ENCODE measurements at regions of chr15 and their contacts with region 1.

Region 1: DNA sequence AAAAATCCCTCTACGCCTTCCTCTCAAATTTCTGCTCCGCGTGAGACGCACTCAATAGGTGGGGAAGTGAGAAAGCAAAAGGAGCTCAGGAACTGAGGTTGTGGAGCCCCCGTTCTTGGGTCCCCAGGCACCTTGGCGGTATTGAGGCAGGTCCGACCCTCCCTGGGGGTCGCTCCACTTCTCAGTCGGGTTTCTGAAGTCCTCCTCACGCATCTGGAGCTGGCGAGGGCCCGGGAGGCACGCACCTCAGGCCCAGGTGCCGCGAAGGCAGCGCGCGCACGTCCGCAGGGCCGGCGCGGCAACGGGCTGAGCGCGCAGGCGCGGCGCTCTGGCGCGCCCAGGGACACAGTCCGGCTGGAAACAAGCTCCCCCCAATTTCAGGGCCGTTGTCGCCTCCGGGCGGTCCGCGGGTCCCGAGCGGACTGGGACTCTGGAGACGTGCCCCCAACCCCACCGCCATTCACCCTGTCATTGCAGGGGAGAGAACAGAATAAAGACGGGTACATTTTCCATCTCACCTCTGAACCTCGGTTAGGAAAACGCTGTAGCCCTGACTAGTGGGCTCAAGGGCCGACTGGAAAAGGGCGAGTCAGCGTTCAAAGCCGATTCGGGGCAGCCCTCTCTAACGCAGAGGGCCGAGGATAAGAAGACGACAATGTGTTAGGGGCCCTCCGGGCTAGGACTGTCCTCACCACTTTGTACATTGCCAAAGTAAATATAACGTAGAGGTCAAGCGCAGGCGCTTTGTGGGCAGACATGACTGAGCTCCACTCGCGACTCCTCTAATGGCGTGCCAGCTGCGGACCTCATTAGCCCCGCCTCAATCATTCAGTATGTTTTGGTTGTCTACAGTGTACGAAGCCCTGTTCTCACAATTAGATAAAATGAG is at the start of gene ZNF770:
- DNase-seq: peak; percentile 94
- ATAC-seq: peak; percentile 86
- H3K4me3 ChIP-seq: peak within 1 kb of the TSS; percentile 86 to 100 (median 96)
- H3K4me3 Mint-ChIP-seq: peak within 1 kb of the TSS; percentile 99
- H3K27ac ChIP-seq: peak within 1 kb of the TSS; percentile 90 to 97
- H3K27ac Mint-ChIP-seq: peak within 1 kb of the TSS; percentile 100
- H3K4me1 ChIP-seq: peaks cover 19 to 22% of the 10 kb centered on the region in 2 donors
- H3K4me1 Mint-ChIP-seq: peaks cover 45% of the 10 kb centered on the region
- H3K27me3 ChIP-seq: no peaks in the 10 kb centered on the region
- H3K27me3 Mint-ChIP-seq: peaks cover 2% of the 10 kb centered on the region
- CTCF ChIP-seq: no peak
- total RNA-seq, gene ZNF770: 45.8 and 49.3 TPM in 2 replicates

Region 2: DNA sequence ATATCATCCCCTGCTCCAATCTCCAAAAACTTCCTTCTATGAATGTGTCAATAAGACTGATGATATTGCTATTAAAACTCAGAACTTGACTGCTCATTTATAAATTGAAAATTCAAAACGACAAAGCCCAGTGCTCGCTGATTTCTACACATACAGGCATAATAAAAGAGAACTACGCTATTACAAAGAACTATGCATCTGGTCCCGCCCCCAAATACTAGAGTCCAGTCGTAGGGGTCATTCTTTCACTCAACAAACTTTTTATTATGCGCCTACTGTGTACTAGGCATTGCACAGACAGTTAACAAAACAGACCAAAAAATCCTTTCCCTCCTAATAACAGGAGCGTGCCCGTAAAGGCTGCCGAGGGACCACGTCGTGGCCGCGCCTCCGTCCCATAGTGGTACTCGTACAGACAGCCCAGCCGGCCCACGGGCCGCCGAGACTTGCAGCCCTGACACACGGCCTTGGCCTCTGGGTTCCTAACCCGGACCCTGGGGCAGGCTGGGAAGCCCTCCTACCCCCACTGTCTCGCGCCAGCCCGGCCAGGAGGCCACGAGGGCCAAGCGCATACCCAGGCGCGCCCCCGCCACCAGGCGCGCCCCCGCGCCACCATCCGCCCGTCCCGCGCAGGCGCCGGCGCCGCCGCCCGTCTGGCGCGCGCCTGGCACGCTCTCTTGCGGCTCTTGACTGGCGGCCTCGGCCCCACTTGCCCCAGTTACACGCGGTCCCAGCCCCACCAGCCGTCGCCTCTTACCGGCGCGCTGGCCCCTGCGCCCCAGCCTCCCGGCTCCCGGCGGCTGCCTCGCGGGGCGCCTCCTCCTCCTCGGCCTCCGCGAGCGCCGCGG is 950.0 kb before region 1 on chr15:
- CTCF ChIA-PET with region 1: no interaction called
- POLR2A ChIA-PET with region 1: no interaction called
- intact Hi-C with region 1: loop called (anchors 1 kb)
- DNase-seq: peak; percentile 89
- ATAC-seq: peak; percentile 78
- H3K4me3 ChIP-seq: peak overlapping the region; percentile 63 to 98 (median 66)
- H3K4me3 Mint-ChIP-seq: peak overlapping the region; percentile 97
- H3K27ac ChIP-seq: peak overlapping the region; percentile 49 to 78
- H3K27ac Mint-ChIP-seq: peak overlapping the region; percentile 96
- H3K4me1 ChIP-seq: peaks cover 14 to 15% of the 10 kb centered on the region in 2 donors
- H3K4me1 Mint-ChIP-seq: peaks cover 18% of the 10 kb centered on the region
- H3K27me3 ChIP-seq: no peaks in the 10 kb centered on the region
- H3K27me3 Mint-ChIP-seq: no peaks in the 10 kb centered on the region
- CTCF ChIP-seq: no peak

Region 3: DNA sequence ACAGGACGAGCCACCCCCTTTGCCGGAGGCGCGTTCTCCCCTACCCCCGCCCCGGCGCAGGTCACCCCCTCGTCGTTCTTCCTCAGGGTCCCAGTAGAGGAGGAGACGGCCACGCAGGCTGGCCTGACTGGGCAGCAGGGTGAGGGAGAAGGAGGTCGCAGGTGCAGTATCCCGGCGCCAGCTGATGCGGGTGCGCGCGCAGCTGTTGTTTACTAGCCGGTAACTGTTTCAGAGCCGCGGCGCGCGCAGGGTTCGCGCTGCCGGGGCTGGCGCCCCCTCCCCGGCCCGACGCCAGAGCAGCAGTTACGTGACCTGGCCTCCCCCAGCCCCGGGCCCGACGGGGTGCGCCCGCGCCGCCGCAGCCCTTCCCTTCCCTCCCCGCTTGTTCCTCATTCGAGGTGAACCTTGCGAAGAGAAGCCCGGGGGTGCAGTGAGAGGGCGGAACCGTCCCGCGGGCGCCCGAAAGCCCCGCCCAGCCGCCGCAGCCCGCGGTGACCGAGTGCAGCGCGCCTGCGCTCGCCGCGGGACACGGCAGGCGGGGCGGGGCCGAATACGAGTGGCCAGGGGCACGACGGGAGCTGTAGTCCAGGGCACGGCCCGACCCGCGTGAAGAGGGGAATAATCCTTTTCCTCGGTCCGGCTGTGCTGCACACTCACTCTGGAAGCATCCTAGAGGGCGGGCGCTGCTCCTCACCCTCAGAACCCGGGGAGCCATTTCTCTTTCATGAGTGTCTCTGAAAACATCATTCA is 650.5 kb before region 1 on chr15 and contains the start of gene SLC12A6:
- CTCF ChIA-PET with region 1: interaction called, 3 read pairs
- POLR2A ChIA-PET with region 1: no interaction called
- intact Hi-C with region 1: loop called (anchors 10 kb)
- DNase-seq: peak; percentile 97
- ATAC-seq: peak; percentile 84
- H3K4me3 ChIP-seq: peak within 1 kb of the TSS; percentile 96 to 98 (median 97)
- H3K4me3 Mint-ChIP-seq: peak within 1 kb of the TSS; percentile 100
- H3K27ac ChIP-seq: peak within 1 kb of the TSS; percentile 87 to 93
- H3K27ac Mint-ChIP-seq: peak within 1 kb of the TSS; percentile 99
- H3K4me1 ChIP-seq: peaks cover 34 to 37% of the 10 kb centered on the region in 2 donors
- H3K4me1 Mint-ChIP-seq: peaks cover 48% of the 10 kb centered on the region
- H3K27me3 ChIP-seq: no peaks in the 10 kb centered on the region
- H3K27me3 Mint-ChIP-seq: no peaks in the 10 kb centered on the region
- CTCF ChIP-seq: no peak
- total RNA-seq, gene SLC12A6: 141 and 156 TPM in 2 replicates

Region 4: GRCh38 chr15:34437687-34438086 is 550.5 kb before region 1 on chr15 and contains the start of gene GOLGA8A:
- CTCF ChIA-PET with region 1: no interaction called
- POLR2A ChIA-PET with region 1: no interaction called
- intact Hi-C with region 1: loop called (anchors 5 kb)
- DNase-seq: peak; percentile 68
- ATAC-seq: peak; percentile 84
- H3K4me3 ChIP-seq: peak within 1 kb of the TSS in 4 of 5 experiments; percentile 46 to 61 (median 59)
- H3K4me3 Mint-ChIP-seq: peak within 1 kb of the TSS; percentile 92
- H3K27ac ChIP-seq: no peak within 1 kb of the TSS
- H3K27ac Mint-ChIP-seq: peak within 1 kb of the TSS; percentile 93
- H3K4me1 ChIP-seq: peaks cover 5 to 6% of the 10 kb centered on the region in 2 donors
- H3K4me1 Mint-ChIP-seq: peaks cover 7% of the 10 kb centered on the region
- H3K27me3 ChIP-seq: no peaks in the 10 kb centered on the region
- H3K27me3 Mint-ChIP-seq: no peaks in the 10 kb centered on the region
- CTCF ChIP-seq: no peak
- total RNA-seq, gene GOLGA8A: 248 and 252 TPM in 2 replicates

Region 5: DNA sequence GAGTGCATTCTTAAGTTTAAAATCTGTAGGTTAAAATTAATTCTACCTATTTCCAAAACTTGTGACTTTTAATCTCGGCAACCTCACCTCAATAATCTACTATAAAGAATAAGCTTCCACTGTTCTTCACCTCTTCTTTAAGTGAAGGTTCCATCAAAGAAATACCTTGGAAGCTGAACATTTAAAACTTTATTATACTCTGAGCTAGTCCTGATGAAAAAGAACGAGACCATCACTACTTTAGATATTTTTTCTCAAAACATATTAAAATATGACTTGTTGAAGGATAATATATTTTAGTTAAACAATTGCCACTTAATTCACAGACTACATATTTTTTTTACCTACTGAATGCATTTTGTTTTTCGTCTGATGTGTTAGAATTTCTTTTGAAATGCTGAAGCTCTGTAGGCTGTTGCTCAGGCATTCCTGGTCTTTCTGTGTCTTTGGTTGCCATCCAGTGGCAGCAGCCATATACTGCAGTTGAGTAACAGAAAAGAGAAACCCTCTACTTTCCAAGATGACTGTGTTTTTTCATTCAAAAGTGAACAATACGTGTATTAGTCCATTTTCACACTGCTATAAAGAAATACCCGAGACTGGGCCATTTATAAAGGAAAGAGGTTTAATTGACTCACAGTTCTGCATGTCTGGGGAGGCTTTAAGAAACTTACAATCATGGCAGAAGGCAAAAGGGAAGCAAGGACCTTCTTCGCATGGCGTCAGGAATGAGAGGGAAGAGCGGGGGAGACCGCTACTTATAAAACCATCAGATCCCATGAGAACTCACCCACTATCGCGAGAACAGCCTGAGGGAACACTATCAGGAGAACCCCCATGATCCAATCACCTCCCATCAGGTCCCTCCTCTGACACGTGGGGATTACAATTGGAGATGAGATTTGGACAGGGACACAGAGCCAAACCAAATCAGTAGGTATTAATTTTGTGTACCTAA is 400.2 kb before region 1 on chr15:
- CTCF ChIA-PET with region 1: no interaction called
- POLR2A ChIA-PET with region 1: no interaction called
- intact Hi-C with region 1: loop called (anchors 5 kb)
- DNase-seq: peak; percentile 69
- ATAC-seq: peak; percentile 61
- H3K4me3 ChIP-seq: peak overlapping the region in 1 of 5 experiments; percentile 15
- H3K4me3 Mint-ChIP-seq: peak overlapping the region; percentile 69
- H3K27ac ChIP-seq: no peak overlapping the region
- H3K27ac Mint-ChIP-seq: peak overlapping the region; percentile 4
- H3K4me1 ChIP-seq: peaks cover 5 to 11% of the 10 kb centered on the region in 2 donors
- H3K4me1 Mint-ChIP-seq: peaks cover 9% of the 10 kb centered on the region
- H3K27me3 ChIP-seq: peaks cover 0 to 7% (median 2%) of the 10 kb centered on the region in 4 experiments
- H3K27me3 Mint-ChIP-seq: peaks cover 4% of the 10 kb centered on the region
- CTCF ChIP-seq: peak; percentile 87

Region 6: GRCh38 chr15:34969340-34970097 is 18.7 kb before region 1 on chr15 and contains the start of gene AQR:
- CTCF ChIA-PET with region 1: interaction called, 37 read pairs
- POLR2A ChIA-PET with region 1: interaction called, 48 read pairs
- intact Hi-C with region 1: loop called (anchors 1 kb)
- DNase-seq: peak; percentile 93
- ATAC-seq: peak; percentile 99
- H3K4me3 ChIP-seq: peak within 1 kb of the TSS; percentile 70 to 94 (median 91)
- H3K4me3 Mint-ChIP-seq: peak within 1 kb of the TSS; percentile 98
- H3K27ac ChIP-seq: peak within 1 kb of the TSS; percentile 56 to 83
- H3K27ac Mint-ChIP-seq: peak within 1 kb of the TSS; percentile 94
- H3K4me1 ChIP-seq: peaks cover 14 to 17% of the 10 kb centered on the region in 2 donors
- H3K4me1 Mint-ChIP-seq: peaks cover 36% of the 10 kb centered on the region
- H3K27me3 ChIP-seq: no peaks in the 10 kb centered on the region
- H3K27me3 Mint-ChIP-seq: no peaks in the 10 kb centered on the region
- CTCF ChIP-seq: peak; percentile 76
- total RNA-seq, gene AQR: 41.7 and 46.6 TPM in 2 replicates

Measured in B cell (primary cell).